Psoas muscle (tissue), 8 donors: ENCODE measurements at regions of chr6 and their contacts with region 1.

Region 1: GRCh38 chr6:35719830-35720733 is 16.8 kb upstream of the ARMC12 start:
- DNase-seq: peak; percentile 32 to 70
- ATAC-seq: peak in 3 of 4 donors; percentile 28 to 38 (median 28)
- H3K4me3 ChIP-seq: peak overlapping the region; percentile 46
- H3K27ac ChIP-seq: peak overlapping the region; percentile 67
- H3K4me1 ChIP-seq: peaks cover 36% of the 10 kb centered on the region
- H3K27me3 ChIP-seq: no peaks in the 10 kb centered on the region
- CTCF ChIP-seq: no peak

Region 2: DNA sequence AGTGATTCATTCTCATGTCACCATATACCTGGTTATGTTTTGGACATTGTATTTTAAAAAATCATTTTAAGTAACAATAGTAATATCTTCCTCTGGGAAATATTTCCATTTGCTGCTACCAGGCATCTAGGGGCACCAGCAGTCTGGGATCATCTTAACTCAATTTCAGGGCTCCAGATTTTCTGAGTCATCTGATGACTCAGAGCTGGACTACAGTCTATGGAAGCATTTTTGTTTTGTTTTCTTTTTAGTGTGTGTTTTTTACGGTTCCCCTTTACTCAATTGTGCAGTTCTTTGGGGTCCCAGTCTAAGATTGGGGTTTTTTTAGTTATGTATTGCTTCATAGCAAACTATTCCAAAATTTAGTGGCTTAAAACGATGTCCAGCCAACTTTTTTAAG is 25.6 kb before region 1 on chr6:
- intact Hi-C with region 1: loop called (anchors 1 to 2 kb)
- DNase-seq: no peak
- ATAC-seq: no peak
- H3K4me3 ChIP-seq: no peak overlapping the region
- H3K27ac ChIP-seq: no peak overlapping the region
- H3K4me1 ChIP-seq: peaks cover 20% of the 10 kb centered on the region
- H3K27me3 ChIP-seq: no peaks in the 10 kb centered on the region
- CTCF ChIP-seq: no peak